ENCODE measurements at regions of chr11 and their contacts with region 1.

Region 1: DNA sequence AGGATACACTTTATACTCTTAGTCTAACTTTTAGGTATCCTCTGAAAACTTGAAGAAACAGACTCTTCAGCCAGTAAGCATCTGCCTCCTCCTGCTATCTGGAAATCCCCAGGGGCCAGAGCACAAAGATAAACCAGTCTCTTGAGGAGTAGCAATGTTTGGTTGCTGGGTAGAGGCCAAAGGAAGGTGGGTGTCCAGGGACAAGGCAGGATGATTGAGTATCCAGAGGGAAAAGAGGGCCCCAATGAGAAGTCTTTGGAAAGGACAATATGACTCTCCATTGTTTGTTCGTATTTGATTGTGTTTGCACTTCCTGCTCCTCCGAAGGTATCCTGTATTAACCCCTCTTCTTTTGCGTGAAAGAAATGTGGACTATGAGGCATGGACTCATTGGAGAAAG is 4.8 kb upstream of the OR52I1 start:
- DNase-seq: no peak
- H3K4me3 ChIP-seq: no peak overlapping the region
- H3K27ac ChIP-seq: no peak overlapping the region
- H3K4me1 ChIP-seq: no peaks in the 10 kb centered on the region
- H3K27me3 ChIP-seq: peaks cover 0 to 6% of the 10 kb centered on the region in 2 experiments
- CTCF ChIP-seq: no peak
- POLR2A ChIP-seq: no peak

Region 2: GRCh38 chr11:4480574-4481566 is 108.1 kb before region 1 on chr11:
- CTCF ChIA-PET with region 1: no interaction called
- POLR2A ChIA-PET with region 1: no interaction called
- dilution Hi-C with region 1: no loop called
- intact Hi-C with region 1: no loop called
- DNase-seq: peak; percentile 66
- H3K4me3 ChIP-seq: no peak overlapping the region
- H3K27ac ChIP-seq: peak overlapping the region; percentile 71
- H3K4me1 ChIP-seq: peaks cover 21% of the 10 kb centered on the region
- H3K27me3 ChIP-seq: peaks cover 0 to 1% of the 10 kb centered on the region in 2 experiments
- CTCF ChIP-seq: no peak
- POLR2A ChIP-seq: no peak

Region 3: GRCh38 chr11:4551346-4551979 is 37.6 kb before region 1 on chr11:
- CTCF ChIA-PET with region 1: interaction called, 5 read pairs
- POLR2A ChIA-PET with region 1: no interaction called
- dilution Hi-C with region 1: no loop called
- intact Hi-C with region 1: loop called (anchors 1 kb)
- DNase-seq: peak; percentile 14
- H3K4me3 ChIP-seq: no peak overlapping the region
- H3K27ac ChIP-seq: no peak overlapping the region
- H3K4me1 ChIP-seq: no peaks in the 10 kb centered on the region
- H3K27me3 ChIP-seq: no peaks in the 10 kb centered on the region
- CTCF ChIP-seq: peak; percentile 32 to 40
- POLR2A ChIP-seq: no peak